ENCODE measurements at regions of chr1 and their contacts with region 1.

Region 1: DNA sequence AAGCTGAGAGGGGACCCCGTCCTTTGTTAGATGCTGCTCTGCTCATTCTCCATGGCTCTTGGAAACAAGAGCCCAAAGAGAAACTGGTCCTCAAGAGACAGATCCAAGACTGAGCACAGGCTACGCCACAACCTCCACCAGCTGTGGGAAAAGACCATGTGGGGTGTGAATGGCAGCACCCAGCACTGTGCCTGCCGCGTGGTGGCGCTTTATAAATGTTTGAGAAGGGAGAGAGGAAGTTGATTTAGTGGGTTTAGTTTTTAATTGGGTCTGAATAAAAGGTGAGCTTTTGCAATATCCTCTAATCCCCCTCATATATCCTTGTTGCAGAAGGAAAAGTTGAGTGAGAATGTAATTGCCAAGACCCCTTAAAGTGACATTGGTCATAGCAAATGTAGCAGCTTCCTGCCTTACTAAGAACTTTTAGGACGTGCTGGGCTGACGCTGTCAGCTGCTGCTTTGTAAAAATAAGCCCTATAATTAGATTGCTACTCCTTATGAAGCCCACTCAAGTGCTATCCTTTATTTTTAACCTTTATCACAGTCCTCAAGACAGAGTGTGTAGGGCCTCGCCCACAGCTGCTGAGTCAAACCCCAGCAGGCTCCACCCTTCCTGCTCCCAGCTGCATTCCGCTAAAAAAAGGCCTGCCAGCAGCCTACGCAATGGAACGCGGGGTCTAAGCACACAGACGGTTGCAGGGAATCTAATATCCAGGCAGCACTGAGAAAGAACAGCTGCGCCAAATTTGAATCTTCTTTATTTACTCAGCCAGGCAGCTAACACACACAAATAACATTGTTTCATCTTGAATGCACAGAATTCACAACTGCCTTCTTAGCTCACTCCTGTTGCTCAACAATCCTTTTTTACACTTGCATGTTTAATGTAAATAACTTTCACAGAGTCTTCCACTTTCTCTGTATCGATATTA is 47.4 kb upstream of the PRDX6 start:
- DNase-seq: peak; percentile 54 to 60
- H3K4me3 ChIP-seq: peak overlapping the region; percentile 14 to 41 (median 25)
- H3K27ac ChIP-seq: peak overlapping the region; percentile 69 to 82
- H3K4me1 ChIP-seq: no peaks in the 10 kb centered on the region
- H3K27me3 ChIP-seq: no peaks in the 10 kb centered on the region
- CTCF ChIP-seq: peak in 2 of 3 donors; percentile 26 to 36
- POLR2A ChIP-seq: no peak

Region 2: DNA sequence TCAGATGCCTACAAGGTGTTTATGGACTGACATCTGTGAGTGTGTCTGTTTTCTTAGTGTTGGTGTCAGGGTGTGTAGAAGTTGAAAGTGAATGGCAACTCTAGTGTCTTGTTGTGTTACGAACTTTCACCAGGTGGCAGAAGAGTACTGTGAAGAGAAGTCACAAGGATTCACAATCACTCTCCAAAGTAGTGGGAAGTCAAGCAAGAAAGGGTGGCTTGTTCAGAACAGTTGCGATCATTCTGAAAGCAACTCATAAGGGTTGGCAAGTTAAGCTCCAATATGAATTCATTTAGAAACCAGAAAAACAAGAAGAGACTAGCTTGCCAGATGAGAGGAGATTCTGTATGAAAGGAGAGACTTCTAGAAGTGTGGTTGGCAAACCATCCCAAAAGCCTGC is 684.7 kb before region 1 on chr1:
- intact Hi-C with region 1: loop called (anchors 10 kb)
- DNase-seq: no peak
- H3K4me3 ChIP-seq: no peak overlapping the region
- H3K27ac ChIP-seq: no peak overlapping the region
- H3K4me1 ChIP-seq: no peaks in the 10 kb centered on the region
- H3K27me3 ChIP-seq: no peaks in the 10 kb centered on the region
- CTCF ChIP-seq: peak; percentile 37 to 70 (median 69)
- POLR2A ChIP-seq: no peak

Region 3: DNA sequence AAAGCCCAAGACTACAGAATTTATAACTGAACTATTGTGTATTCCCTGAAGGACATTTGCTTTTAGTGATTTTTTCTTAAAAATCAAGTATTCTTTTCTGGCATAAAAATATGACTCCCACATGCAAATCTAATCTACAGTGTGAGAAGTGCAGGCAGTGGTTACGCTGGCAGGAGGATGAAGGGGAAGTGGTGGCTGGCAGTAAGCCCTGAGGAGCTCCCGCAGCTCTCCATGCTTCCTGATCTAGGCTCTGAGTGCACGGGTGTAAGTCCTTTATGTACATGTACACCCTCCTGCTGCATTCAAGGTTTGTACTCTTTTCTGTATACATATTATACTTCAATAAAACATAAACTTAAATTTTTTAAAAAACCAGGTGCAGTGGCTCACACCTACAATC is 20.1 kb before region 1 on chr1:
- intact Hi-C with region 1: no loop called
- DNase-seq: no peak
- H3K4me3 ChIP-seq: no peak overlapping the region
- H3K27ac ChIP-seq: no peak overlapping the region
- H3K4me1 ChIP-seq: no peaks in the 10 kb centered on the region
- H3K27me3 ChIP-seq: no peaks in the 10 kb centered on the region
- CTCF ChIP-seq: no peak
- POLR2A ChIP-seq: no peak

Measured in breast epithelium (tissue), 4 donors.